ENCODE measurements at regions of chr19 and their contacts with region 1.

Region 1: DNA sequence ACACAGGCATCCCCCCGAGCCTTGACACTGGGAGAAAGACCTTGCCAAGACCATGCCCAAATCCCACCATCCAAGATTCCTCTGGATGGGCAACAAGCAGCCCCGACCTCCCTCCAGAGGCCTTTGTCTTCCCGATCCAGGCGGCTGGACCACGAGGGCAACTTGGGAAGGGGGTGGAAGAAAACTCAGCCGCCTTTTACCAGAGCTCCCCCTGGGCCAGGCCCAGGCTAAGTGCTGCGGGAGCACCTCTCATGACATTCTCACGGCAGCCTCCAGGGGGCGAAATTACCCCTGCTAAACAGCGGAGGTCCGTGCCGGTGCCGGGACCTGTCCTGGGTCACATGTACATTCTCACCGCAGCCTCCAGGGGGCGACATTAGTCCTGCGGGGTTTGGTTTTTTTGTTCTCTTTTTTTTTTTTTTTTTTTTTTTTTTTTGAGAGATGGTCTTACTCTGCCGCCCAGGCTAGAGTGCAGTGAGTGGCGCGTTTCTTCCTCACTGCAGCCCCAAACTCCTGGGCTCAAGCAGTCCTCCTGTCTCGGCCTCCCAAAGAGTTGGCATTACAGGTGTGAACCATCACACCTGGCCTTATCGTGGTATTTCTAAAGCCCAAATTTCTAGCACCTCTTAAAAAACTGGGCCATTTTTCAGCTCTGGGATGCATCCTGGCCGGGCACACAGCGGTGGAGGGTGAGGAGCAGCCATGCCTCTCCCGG is 2.1 kb upstream of the RSPH6A start:
- DNase-seq: peak; percentile 95
- H3K4me3 ChIP-seq: no peak overlapping the region
- H3K27ac ChIP-seq: no peak overlapping the region
- H3K4me1 ChIP-seq: peaks cover 22% of the 10 kb centered on the region
- H3K27me3 ChIP-seq: no peaks in the 10 kb centered on the region
- CTCF ChIP-seq: peak; percentile 98 to 100
- POLR2A ChIP-seq: peak; percentile 28

Region 2: DNA sequence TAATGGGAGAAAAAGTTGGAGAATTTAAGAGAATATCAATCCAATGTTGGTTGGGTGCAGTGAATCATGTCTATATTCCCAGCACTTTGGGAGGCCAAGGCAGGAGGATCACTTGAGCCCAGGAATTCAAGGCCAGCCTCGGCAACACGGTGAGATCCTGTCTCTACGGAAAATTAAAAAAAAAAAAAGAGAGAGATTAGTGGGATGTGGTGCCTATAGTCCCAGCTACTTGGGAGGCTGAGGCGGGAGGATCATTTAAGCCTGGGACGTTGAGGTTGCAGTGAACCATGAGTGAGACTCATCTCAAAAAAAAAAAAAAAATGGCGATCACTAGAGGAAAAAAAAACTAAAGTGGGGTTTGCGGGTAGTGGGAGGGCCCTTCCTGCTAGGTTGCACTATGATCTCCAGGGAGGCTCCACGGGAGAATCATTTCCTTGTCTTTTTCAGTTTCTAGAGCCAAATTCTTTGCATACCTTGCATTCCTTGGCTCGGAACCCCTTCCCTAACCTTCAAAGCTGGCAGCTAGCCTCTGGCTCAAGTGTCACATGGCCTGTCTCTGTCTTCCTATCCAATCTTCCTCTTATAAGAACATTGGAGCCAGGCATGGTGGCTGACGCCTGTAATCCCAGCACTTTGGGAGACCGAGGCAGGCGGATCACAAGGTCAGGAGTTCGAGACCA is 441.0 kb before region 1 on chr19:
- CTCF ChIA-PET with region 1: no interaction called
- POLR2A ChIA-PET with region 1: no interaction called
- dilution Hi-C with region 1: no loop called
- intact Hi-C with region 1: no loop called
- DNase-seq: peak; percentile 85
- H3K4me3 ChIP-seq: no peak overlapping the region
- H3K27ac ChIP-seq: peak overlapping the region; percentile 69
- H3K4me1 ChIP-seq: peaks cover 12% of the 10 kb centered on the region
- H3K27me3 ChIP-seq: no peaks in the 10 kb centered on the region
- CTCF ChIP-seq: no peak
- POLR2A ChIP-seq: no peak

Region 3: DNA sequence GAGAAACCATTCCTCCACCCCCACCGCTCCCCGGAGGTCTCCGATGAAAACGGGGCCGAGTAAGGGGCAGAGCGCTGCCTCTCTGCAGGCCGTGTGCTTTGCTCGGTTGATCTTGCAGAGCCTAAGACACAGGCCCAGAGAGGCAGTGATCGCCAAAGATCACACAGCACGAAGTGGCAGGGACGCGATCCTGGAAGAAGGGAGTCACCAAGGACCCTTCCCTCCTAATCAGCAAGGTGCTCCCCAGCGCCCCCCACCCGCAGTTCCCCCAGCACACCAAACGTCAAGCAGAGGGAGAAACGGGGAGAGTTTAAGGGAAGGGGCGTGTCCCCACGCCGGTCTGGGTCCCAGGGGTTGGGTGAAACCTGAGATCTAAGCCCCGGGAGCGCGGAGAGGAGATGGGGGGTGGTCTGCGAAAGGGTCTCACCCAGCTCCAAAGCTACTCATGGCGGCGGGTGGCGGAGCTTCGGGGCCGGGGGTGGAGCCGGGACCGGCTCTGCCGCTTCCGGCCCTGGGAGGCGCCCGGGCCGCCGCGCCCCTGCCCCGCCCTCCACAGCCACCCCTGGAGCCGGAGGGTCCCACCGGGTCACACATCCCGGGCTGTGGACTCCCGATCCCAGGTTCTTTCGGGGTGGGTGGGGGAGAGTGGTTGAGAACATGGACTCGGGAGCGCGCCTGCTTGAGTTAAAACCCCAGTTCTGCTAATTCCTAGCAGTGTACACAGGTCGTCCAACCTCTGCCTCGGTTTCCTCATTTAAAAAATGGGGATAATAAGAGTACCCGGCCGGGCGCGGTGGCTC is 178.0 kb before region 1 on chr19 and contains the start of gene EML2:
- CTCF ChIA-PET with region 1: no interaction called
- POLR2A ChIA-PET with region 1: no interaction called
- dilution Hi-C with region 1: no loop called
- intact Hi-C with region 1: no loop called
- DNase-seq: peak; percentile 33
- H3K4me3 ChIP-seq: peak within 1 kb of the TSS; percentile 45 to 62 (median 52)
- H3K27ac ChIP-seq: peak within 1 kb of the TSS; percentile 10
- H3K4me1 ChIP-seq: peaks cover 38% of the 10 kb centered on the region
- H3K27me3 ChIP-seq: no peaks in the 10 kb centered on the region
- CTCF ChIP-seq: peak in 1 of 2 donors; percentile 15
- POLR2A ChIP-seq: no peak
- total RNA-seq, gene EML2: 27.4 and 28.9 TPM in 2 replicates

Region 4: DNA sequence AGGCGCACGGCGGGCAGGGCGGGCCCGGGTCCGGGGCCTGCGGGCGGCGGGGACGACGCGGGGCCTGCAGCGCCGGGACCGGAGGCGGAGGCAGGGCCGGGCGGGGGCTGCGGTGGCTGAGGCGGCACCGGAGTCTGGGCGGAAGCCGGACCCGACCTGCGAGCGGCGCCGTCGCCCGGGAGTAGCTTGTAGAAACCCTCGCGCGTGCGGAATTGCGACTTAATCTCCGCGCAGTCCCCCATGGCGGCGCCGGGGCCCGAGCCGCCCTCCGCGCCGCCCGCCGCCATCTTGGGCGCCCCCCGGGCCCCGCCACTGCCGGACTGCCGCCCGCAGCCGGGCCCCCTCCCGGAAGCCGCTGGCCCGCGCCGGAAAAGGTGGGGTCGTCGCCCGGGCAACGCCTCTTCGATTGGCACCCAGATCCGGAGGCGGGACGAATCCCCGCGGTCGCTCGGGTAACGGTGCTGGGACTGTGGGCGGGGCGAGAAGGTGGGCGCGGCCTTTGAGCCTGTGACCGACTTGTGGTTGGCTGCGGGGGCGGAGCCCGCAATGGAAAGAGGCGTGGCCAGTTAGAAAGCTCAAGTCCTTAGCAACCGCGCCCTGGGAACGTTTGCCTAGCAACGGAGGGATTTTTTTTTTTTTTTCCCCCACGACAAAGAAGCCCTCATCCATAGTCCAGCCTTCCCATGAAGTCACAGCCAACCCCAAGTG is 24.5 kb before region 1 on chr19 and contains the start of gene DMWD:
- CTCF ChIA-PET with region 1: interaction called, 13 read pairs
- POLR2A ChIA-PET with region 1: no interaction called
- dilution Hi-C with region 1: no loop called
- intact Hi-C with region 1: no loop called
- DNase-seq: peak; percentile 99
- H3K4me3 ChIP-seq: peak within 1 kb of the TSS; percentile 83 to 88 (median 85)
- H3K27ac ChIP-seq: peak within 1 kb of the TSS; percentile 57
- H3K4me1 ChIP-seq: peaks cover 16% of the 10 kb centered on the region
- H3K27me3 ChIP-seq: no peaks in the 10 kb centered on the region
- CTCF ChIP-seq: no peak
- POLR2A ChIP-seq: peak; percentile 89
- total RNA-seq, gene DMWD: 81.1 and 81.6 TPM in 2 replicates

Region 5: GRCh38 chr19:45804140-45804958 is 12.8 kb before region 1 on chr19:
- CTCF ChIA-PET with region 1: interaction called, 38 read pairs
- POLR2A ChIA-PET with region 1: interaction called, 11 read pairs
- dilution Hi-C with region 1: no loop called
- intact Hi-C with region 1: no loop called
- DNase-seq: no peak
- H3K4me3 ChIP-seq: no peak overlapping the region
- H3K27ac ChIP-seq: no peak overlapping the region
- H3K4me1 ChIP-seq: peaks cover under 1% of the 10 kb centered on the region
- H3K27me3 ChIP-seq: no peaks in the 10 kb centered on the region
- CTCF ChIP-seq: no peak
- POLR2A ChIP-seq: no peak

Region 6: GRCh38 chr19:45848922-45849321 is 31.8 kb after region 1 on chr19:
- CTCF ChIA-PET with region 1: interaction called, 10 read pairs
- POLR2A ChIA-PET with region 1: no interaction called
- dilution Hi-C with region 1: no loop called
- intact Hi-C with region 1: no loop called
- DNase-seq: no peak
- H3K4me3 ChIP-seq: no peak overlapping the region
- H3K27ac ChIP-seq: no peak overlapping the region
- H3K4me1 ChIP-seq: no peaks in the 10 kb centered on the region
- H3K27me3 ChIP-seq: no peaks in the 10 kb centered on the region
- CTCF ChIP-seq: peak in 1 of 2 donors; percentile 22
- POLR2A ChIP-seq: no peak

Region 7: DNA sequence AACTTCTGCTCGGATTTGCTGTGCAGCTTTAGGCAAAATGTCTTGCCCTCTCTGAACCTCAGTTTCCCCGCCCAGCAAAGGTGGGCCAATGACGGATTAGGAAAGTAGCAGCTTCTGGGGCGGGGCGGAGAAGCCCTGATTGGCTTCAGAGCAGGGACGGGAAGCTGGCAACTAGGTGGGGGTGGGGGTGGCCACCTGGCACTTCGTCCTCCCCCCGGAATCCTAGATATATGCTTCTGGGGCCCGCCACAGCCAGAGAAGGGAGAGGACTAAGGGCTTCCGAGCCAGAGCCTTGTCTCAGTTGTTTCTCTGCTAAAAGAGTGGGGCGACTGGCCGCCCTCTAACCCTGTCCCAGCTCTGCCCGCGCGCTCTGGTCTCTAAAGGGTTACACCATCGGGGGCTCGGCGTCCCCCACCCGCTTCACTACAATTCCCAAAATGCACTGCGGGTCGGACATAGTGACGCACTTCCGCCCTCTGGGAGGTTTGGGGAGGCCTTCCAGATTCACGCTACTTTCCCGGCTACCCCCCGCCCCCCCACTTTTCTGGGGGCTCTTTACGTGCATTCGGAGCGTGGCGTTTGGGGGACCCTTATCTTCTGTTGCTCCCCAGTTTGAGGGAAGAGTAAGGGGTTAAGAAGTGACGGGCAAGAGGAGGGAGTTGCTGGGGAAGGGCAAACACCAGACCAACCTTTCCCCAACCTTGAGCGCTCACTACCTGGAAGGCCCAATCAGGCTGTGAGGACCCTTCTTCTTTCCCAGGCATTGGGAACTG is 69.4 kb after region 1 on chr19:
- CTCF ChIA-PET with region 1: interaction called, 14 read pairs
- POLR2A ChIA-PET with region 1: no interaction called
- dilution Hi-C with region 1: no loop called
- intact Hi-C with region 1: loop called (anchors 1 kb)
- DNase-seq: peak; percentile 92
- H3K4me3 ChIP-seq: peak overlapping the region; percentile 48 to 94 (median 57)
- H3K27ac ChIP-seq: peak overlapping the region; percentile 80
- H3K4me1 ChIP-seq: peaks cover 10% of the 10 kb centered on the region
- H3K27me3 ChIP-seq: no peaks in the 10 kb centered on the region
- CTCF ChIP-seq: no peak
- POLR2A ChIP-seq: peak; percentile 83